ENCODE measurements at regions of chr10 and their contacts with region 1.

Region 1: DNA sequence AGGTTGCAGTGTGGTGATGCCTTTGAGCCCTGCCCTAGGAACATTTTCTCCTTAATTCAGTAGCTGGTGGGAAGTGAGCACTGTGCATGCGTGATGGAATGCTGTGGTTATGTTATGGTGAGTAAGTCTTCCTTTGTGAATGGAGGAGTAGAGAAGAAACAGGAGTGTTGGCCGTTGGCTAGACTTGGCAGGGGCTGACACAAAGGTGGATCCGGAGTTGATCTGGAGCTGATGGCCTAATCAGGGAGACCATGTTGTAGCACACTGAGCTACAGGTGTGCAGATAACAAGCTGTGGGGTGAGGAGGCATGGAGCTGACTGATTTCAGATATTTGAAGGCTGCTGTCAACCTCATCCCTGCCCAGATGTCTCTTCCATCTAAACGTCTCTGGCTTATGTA is 122.3 kb downstream of the CNNM2 start:
- DNase-seq: peak; percentile 97
- ATAC-seq: peak; percentile 38
- H3K4me3 ChIP-seq: no peak overlapping the region
- H3K27ac ChIP-seq: peak overlapping the region; percentile 49
- H3K4me1 ChIP-seq: peaks cover 47% of the 10 kb centered on the region
- H3K27me3 ChIP-seq: no peaks in the 10 kb centered on the region
- CTCF ChIP-seq: no peak
- POLR2A ChIP-seq: no peak; the same call in 1 of the 2 replicates
- RAD21 ChIP-seq: peak; percentile 24

Region 2: GRCh38 chr10:102998005-102998404 is 42.4 kb before region 1 on chr10:
- CTCF ChIA-PET with region 1: no interaction called
- POLR2A ChIA-PET with region 1: no interaction called
- dilution Hi-C with region 1: no loop called
- in situ Hi-C with region 1: loop called (anchors 5 kb)
- intact Hi-C with region 1: loop called (anchors 10 kb)
- DNase-seq: no peak
- ATAC-seq: no peak
- H3K4me3 ChIP-seq: no peak overlapping the region
- H3K27ac ChIP-seq: no peak overlapping the region
- H3K4me1 ChIP-seq: peaks cover 6% of the 10 kb centered on the region
- H3K27me3 ChIP-seq: no peaks in the 10 kb centered on the region
- CTCF ChIP-seq: no peak
- POLR2A ChIP-seq: no peak
- RAD21 ChIP-seq: no peak

Region 3: GRCh38 chr10:103021897-103022286 is 18.5 kb before region 1 on chr10:
- CTCF ChIA-PET with region 1: no interaction called
- POLR2A ChIA-PET with region 1: no interaction called
- dilution Hi-C with region 1: no loop called
- in situ Hi-C with region 1: no loop called
- intact Hi-C with region 1: loop called (anchors 2 kb)
- DNase-seq: peak; percentile 97
- ATAC-seq: peak; percentile 73
- H3K4me3 ChIP-seq: no peak overlapping the region
- H3K27ac ChIP-seq: peak overlapping the region; percentile 14; the same call in 1 of the 2 replicates
- H3K4me1 ChIP-seq: peaks cover 21% of the 10 kb centered on the region
- H3K27me3 ChIP-seq: no peaks in the 10 kb centered on the region
- CTCF ChIP-seq: no peak
- POLR2A ChIP-seq: no peak
- RAD21 ChIP-seq: no peak; the same call in 1 of the 2 replicates

Region 4: DNA sequence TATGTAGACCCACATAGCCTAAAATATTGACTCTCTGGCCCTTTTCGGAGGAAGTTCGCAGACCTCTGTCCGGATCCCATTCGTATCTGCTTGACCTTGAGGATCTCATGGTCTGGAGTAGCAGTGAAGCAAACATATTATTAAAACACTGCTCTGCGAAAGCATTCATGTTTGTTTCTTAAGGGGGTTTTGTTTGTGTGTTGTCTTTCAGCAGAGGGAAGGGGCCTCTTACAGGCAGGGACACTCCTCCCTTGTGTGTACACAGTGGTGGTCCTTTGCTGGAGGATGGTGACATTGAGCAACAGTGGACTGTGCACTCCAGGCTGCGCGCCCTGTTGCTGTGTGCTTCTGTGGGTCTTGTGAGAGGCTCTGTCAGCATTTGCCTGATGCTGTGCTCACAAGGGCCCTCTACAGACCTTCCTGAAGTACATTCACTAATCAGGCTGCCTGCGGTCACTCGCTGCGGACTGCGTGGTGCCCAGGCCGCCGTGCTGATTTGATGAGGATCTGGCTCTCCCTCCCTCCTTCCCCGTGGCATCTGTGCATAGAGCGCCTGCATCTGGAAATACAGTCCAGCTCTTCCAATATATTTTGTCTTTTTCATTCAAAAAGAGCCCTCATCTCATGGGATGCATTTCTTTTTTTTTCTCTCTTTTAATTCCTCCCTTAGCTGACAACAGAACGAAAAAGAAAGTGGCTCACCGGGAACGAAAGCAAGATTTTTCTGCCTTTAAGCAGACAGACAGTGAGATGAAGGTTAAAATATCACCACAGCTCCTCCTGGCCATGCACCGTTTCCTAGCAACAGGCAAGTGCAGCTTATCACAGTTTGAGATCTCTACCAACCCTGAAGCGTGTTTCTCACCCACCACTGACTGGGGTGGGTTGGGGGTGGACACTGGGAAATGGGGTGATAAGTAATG is 13.5 kb after region 1 on chr10:
- CTCF ChIA-PET with region 1: interaction called, 4 read pairs
- POLR2A ChIA-PET with region 1: no interaction called
- dilution Hi-C with region 1: no loop called
- in situ Hi-C with region 1: no loop called
- intact Hi-C with region 1: loop called (anchors 1 kb)
- DNase-seq: peak; percentile 88
- ATAC-seq: peak; percentile 94
- H3K4me3 ChIP-seq: peak overlapping the region; percentile 1; the same call in 1 of the 2 replicates
- H3K27ac ChIP-seq: peak overlapping the region; percentile 33; the same call in 1 of the 2 replicates
- H3K4me1 ChIP-seq: peaks cover 15% of the 10 kb centered on the region
- H3K27me3 ChIP-seq: no peaks in the 10 kb centered on the region
- CTCF ChIP-seq: peak; percentile 56
- POLR2A ChIP-seq: no peak
- RAD21 ChIP-seq: peak; percentile 70